Left cardiac atrium (tissue), 4 donors: ENCODE measurements at regions of chr4 and their contacts with region 1.

Region 1: DNA sequence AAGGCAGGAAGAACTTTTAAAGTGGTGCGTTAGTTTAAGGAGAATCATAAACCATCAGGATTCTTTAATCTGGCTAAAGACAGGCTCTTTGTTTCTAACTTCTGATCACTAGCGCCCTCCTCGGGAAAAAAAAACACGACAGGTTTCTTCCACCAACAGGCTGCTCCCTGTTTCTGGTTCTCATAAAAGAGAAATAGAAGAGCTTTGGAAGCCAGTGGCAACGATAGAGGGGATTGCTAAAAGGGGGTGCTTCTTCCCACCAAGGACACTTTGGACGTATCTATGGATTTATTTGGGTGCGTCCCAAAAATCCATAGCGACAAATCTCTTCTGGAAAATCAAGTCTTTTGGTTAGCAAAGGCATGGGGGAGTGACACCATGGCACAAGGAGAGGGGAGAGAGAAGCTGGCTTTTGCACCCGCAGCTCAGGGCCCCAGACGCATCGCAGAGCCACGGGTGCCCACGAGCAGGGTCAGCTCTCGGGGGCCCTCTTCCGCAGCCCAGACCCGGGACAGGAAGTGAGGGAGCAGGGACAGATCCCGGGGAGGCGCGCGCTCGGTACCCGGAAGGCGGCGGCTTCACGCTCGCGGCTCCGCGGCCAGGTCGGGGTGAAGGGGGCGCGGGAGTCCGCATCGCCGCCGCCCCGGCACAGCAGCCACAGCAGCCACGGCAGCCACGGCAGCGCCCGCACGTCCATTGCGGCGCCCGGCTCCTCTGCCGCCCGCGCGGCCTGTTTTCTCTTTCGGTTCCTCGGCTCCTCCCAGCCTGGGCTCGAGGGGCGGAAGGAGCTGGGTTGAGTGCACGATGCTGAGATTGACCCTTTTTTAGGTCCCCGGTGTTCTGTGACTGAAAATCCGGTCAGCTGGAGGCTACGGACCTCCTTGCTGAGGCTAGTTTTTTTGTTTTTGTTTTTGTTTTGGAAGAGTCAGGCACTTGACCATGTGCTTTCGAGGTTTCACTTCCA is at the start of gene CTSO:
- DNase-seq: peak; percentile 83
- ATAC-seq: peak; percentile 97 to 98
- total RNA-seq, gene CTSO: 10.0 to 10.2 TPM

Region 2: DNA sequence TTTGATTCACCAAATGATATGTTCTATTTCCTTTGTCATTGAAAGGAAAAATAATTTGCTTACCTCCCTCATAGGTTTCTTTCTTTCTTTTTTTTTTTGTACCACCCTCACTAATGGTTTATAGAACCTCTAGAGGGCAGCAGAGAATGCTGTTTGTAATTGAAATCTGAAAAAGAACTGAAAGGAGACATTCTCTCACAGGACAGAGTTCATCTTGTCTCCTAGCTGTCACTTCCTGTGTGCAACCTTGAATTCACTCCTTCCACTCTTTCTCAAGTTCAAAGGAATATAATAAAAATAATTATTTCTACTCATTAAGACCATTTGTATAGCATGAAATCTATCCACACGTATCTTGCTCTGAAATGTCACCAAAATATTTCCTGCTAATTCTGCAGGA is 143.6 kb before region 1 on chr4:
- intact Hi-C with region 1: loop called in 1 of 2 experiments (anchors 5 kb)
- DNase-seq: no peak
- ATAC-seq: peak; percentile 76 to 82

Region 3: GRCh38 chr4:155995069-155995468 is 41.6 kb after region 1 on chr4:
- intact Hi-C with region 1: no loop called
- DNase-seq: no peak
- ATAC-seq: no peak

Region 4: DNA sequence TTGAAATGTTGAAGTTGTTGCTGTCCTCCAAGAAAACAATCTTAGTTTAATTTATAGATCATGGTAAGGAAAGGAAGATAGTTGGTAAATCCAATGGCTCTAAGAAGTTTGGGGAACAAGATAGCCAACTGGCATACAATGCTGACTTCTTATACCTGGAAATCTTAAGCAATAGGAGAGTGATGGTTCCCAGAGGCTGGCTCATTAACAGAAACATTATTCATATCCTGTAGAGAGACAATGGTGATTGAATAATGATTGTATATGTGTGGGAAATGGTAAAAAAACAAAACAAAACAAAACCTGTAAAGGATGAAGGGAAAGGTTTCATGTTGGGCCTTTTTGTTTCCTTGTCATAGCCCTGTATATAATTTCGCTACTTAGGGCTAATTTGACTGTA is 175.2 kb after region 1 on chr4:
- intact Hi-C with region 1: no loop called
- DNase-seq: no peak
- ATAC-seq: no peak